ENCODE measurements at regions of chr15 and their contacts with region 1.

Region 1: GRCh38 chr15:90886041-90886614 is 1.8 kb downstream of the FES start:
- DNase-seq: peak; percentile 66
- H3K27ac ChIP-seq: no peak overlapping the region
- CTCF ChIP-seq: peak; percentile 99

Region 2: DNA sequence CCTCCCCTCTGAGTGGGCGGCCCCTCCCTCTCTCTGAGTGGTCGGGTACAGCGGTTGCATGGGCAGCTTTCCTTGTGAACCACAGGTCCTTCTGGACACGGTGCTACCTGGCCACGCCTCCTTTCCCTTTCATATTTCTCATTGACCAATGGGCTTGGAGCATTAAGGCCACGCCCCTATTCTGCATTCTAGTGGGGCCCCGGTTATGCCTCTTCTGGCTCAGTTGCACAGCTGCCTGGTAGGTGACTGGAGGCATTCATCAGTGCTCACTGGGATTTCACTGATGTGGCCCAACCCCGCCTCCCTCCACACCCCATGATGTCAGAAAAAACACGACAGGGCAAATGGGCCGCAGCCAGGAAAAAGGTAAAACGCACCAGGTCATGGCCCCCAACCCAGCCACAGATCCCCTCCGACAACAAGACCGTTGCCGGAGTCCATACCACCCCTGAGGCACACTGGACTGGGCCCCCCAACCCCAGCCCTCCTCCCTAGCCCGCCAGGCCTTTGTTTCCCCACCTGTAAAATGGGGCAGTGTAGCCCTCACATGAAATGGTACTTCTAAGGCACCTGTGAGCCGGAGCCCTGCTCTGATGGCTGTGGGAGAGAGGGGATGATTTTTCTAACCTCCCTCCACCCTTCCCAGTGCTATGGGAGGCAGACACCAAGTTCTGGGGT is 594.3 kb before region 1 on chr15:
- CTCF ChIA-PET with region 1: interaction called, 10 read pairs
- POLR2A ChIA-PET with region 1: no interaction called
- DNase-seq: peak; percentile 56
- H3K27ac ChIP-seq: no peak overlapping the region
- CTCF ChIP-seq: no peak

Region 3: DNA sequence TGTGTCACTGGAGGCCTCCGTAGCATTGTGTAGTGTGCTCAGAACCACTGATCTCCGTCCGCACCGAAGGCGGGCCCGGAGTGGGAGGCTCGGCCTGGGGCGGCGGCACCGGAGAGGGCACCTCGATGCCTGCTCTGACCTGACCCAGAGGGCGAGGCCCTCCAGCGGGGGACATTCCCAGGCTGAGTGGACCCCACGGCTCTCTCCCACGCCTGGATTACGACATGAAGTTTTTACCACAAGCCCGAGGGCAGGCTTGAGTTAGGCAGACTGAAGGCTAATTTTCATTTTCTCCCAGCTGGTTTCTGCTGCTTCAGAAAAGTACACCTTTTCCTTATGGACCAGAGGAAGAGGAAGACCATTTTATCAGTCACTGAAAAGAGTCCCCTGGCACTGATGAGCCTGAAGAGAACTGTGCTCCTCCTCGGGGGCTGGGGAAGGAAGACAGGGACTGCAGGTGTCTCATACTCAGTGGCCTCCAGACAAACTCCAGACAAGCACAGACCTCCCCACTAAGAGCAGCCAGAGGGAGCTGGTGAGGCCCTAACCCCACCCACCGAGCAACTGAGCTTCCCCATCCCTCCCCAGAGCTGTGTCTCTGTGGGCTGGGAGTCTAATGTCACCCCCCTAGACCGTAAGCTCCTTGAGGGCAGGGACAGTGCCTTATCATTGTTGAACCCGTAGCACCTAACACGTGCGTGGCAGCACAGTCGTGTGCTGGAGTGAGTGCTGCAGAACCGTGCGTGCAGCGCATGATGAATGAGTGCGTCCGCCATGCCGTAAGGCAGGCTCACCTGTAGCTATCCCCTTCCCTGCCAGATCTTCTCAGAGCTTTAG is 243.4 kb before region 1 on chr15:
- CTCF ChIA-PET with region 1: interaction called, 35 read pairs
- POLR2A ChIA-PET with region 1: no interaction called
- DNase-seq: no peak
- H3K27ac ChIP-seq: peak overlapping the region; percentile 31
- CTCF ChIP-seq: no peak

Region 4: GRCh38 chr15:90648137-90649070 is 237.7 kb before region 1 on chr15:
- CTCF ChIA-PET with region 1: interaction called, 35 read pairs
- POLR2A ChIA-PET with region 1: no interaction called
- DNase-seq: peak; percentile 74
- H3K27ac ChIP-seq: no peak overlapping the region; the same call in 1 of the 2 replicates
- CTCF ChIP-seq: peak; percentile 95

Region 5: DNA sequence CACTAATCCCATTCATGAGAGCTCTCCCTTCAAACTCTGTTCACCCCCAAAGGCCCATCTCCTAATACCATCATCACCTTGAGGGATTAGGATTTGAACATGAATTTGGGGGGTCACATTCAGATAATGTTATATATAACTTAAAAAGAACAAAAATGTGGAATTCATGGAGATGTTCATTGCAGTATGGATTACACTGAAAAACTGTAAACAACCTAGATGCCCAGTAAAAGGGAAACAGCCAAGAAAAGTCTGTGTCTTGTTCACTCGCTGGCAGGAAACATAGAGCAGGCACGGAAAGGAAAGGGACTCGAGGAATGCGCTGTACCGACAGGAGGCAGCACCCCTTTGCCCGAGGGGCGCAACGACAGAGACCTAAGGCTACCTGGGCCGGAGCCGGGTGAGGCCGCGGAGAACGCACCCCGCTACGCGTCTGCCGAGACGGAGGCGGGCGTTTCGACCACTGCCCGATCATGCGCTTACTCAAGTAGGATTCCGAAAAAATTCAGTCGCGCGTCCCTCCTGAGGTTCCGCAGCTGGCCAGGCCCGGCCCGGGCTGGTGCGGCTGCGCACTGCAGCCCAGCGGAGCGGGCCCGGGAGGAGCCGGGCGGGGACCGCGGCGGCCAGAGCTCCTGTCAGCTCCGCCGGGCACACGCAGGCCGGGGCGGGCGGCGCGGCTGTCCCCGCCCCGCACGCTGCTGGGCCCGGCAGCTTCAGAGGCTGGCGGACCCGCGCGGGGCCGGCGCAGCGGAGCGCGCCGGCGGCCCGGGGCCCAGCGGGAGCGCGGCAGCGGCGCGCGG is 16.1 kb after region 1 on chr15:
- CTCF ChIA-PET with region 1: interaction called, 10 read pairs
- POLR2A ChIA-PET with region 1: no interaction called
- DNase-seq: peak; percentile 94
- H3K27ac ChIP-seq: peak overlapping the region; percentile 84
- CTCF ChIP-seq: peak; percentile 92

Measured in RWPE1 (cell line).